Posterior cingulate gyrus (tissue), 11 donors: ENCODE measurements at regions of chrX and their contacts with region 1.

Region 1: GRCh38 chrX:70030301-70030767 is 19.4 kb downstream of the AWAT2 start:
- DNase-seq: peak in 5 of 10 donors; percentile 8 to 84 (median 22)

Region 2: DNA sequence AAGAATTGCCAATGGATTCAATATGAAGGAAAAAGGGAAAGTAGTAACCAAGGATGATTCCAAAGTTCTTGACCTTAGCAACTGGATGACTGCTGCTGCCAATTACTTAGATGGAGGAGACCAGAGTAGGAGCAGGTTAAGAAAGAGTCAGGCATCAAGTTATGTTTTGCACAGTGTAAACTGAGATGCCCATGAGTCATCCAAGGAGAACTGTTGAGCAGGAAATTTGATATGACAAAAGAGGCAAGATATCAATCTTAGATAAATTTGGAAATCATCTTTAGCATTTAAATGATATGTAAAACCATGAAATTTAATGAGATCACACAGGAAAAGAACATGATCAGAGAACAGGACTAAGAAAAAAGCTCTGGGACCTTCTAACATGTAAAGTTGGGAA is 1958.3 kb before region 1 on chrX:
- intact Hi-C with region 1: no loop called
- DNase-seq: no peak

Region 3: DNA sequence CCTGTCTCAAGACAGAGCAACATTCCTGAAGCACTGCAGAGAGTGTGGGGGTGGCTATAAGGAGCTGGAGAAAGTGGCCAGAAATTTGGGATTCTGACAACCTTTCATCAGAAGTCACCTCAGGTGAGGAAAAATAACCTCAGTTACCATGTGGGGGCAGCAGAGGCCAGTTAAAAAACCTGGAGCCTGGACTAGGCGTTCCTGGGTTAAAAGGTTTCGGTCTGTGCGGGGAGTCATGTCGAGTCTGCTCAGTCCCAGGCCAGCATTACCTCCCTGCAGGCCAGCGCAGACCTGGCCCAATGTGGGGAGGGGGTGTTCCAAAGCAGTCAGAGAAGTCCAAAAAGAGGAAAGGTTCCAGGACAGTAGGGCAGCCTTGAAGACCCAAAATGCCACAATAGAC is 537.1 kb before region 1 on chrX:
- intact Hi-C with region 1: loop called (anchors 1 kb)
- DNase-seq: peak in 2 of 10 donors; percentile 30 to 34